ENCODE measurements at regions of chr13 and their contacts with region 1.

Region 1: GRCh38 chr13:52665325-52665724 is 12.7 kb downstream of the SUGT1 start:
- DNase-seq: no peak
- H3K4me3 ChIP-seq: no peak overlapping the region
- H3K4me3 Mint-ChIP-seq: no peak overlapping the region
- H3K27ac Mint-ChIP-seq: no peak overlapping the region
- H3K4me1 ChIP-seq: no peaks in the 10 kb centered on the region
- H3K4me1 Mint-ChIP-seq: no peaks in the 10 kb centered on the region
- H3K27me3 ChIP-seq: no peaks in the 10 kb centered on the region
- H3K27me3 Mint-ChIP-seq: no peaks in the 10 kb centered on the region
- CTCF ChIP-seq: peak; percentile 42 to 44

Region 2: DNA sequence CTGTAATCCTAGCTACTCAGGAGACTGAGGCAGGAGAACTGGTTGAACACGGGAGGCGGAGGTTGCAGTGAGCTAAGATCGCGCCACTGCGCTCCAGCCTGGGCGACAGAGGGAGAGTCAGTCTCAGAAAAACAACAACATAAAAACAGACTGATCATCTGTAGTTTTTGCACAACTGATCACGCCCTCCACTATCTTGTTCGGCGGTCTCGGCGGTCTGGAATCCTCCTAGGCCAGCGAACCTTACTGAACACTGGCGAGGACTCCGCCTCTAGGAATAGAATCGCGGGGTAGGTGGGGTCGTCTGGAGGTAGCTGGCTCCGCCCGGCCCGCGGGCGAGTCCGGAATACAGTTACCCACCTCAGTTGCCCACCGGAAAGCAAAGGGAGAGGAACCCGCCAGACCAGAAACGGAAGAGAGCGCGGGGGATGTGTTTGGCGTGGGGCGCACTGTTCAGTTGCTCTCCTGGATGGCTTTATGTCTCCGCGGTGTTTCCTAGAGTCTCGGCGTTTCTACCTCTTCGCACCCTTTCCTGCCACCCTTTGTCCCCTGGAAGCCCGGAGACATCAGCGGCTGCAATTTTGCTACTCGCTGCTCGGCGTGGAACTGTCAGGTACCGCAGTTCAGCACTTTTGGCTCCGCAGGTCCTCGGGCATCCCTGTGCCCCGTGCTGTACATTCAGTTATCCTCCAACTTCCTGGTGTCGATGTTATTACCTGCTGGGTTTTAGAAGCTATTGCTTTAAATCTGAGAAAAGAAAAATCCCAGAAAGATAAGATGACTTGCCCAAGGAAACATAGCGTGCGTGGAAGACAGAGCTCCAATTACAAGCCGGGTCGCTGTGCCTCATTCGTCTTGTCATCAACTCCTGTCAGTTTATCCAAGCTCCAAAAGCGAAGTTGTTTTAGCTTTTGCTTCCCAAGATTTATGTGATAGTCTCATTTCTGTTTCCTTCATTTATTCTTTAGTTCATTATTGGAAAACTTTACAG is 48.0 kb before region 1 on chr13:
- CTCF ChIA-PET with region 1: no interaction called
- POLR2A ChIA-PET with region 1: no interaction called
- intact Hi-C with region 1: no loop called
- DNase-seq: peak; percentile 89
- H3K4me3 ChIP-seq: peak overlapping the region; percentile 68
- H3K4me3 Mint-ChIP-seq: peak overlapping the region; percentile 100
- H3K27ac Mint-ChIP-seq: peak overlapping the region; percentile 87
- H3K4me1 ChIP-seq: no peaks in the 10 kb centered on the region
- H3K4me1 Mint-ChIP-seq: no peaks in the 10 kb centered on the region
- H3K27me3 ChIP-seq: no peaks in the 10 kb centered on the region
- H3K27me3 Mint-ChIP-seq: no peaks in the 10 kb centered on the region
- CTCF ChIP-seq: no peak

Region 3: GRCh38 chr13:52652196-52652979 is 12.9 kb before region 1 on chr13 and contains the start of gene SUGT1:
- CTCF ChIA-PET with region 1: interaction called, 13 read pairs
- POLR2A ChIA-PET with region 1: interaction called, 8 read pairs
- intact Hi-C with region 1: no loop called
- DNase-seq: peak; percentile 98
- H3K4me3 ChIP-seq: peak within 1 kb of the TSS; percentile 53
- H3K4me3 Mint-ChIP-seq: no peak within 1 kb of the TSS
- H3K27ac Mint-ChIP-seq: no peak within 1 kb of the TSS
- H3K4me1 ChIP-seq: peaks cover 17% of the 10 kb centered on the region
- H3K4me1 Mint-ChIP-seq: no peaks in the 10 kb centered on the region
- H3K27me3 ChIP-seq: no peaks in the 10 kb centered on the region
- H3K27me3 Mint-ChIP-seq: no peaks in the 10 kb centered on the region
- CTCF ChIP-seq: peak; percentile 71 to 83
- total RNA-seq, gene SUGT1: 73.6 and 84.3 TPM in 2 replicates

Region 4: DNA sequence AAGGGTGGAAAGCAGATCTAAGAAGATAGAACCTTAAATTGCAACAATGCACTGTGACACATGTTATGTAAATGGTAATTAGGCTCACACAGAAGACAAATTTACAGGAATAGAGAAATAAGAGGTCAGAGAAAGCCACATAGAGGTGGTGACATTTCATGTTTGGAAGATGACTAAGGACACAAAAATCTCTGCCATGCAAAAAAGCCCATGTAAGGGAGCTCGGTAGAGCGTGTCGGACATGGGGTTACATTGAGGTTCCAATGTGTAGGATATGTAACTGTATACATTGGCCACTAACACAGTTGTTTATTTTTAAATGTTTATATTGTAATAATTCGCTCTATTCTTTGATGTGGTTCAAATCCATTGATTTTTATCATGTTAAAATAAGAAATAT is 21.1 kb after region 1 on chr13:
- CTCF ChIA-PET with region 1: no interaction called
- POLR2A ChIA-PET with region 1: no interaction called
- intact Hi-C with region 1: no loop called
- DNase-seq: no peak
- H3K4me3 ChIP-seq: no peak overlapping the region
- H3K4me3 Mint-ChIP-seq: no peak overlapping the region
- H3K27ac Mint-ChIP-seq: no peak overlapping the region
- H3K4me1 ChIP-seq: peaks cover 11% of the 10 kb centered on the region; the same call in 1 of the 2 replicates
- H3K4me1 Mint-ChIP-seq: peaks cover 6% of the 10 kb centered on the region
- H3K27me3 ChIP-seq: no peaks in the 10 kb centered on the region
- H3K27me3 Mint-ChIP-seq: no peaks in the 10 kb centered on the region
- CTCF ChIP-seq: no peak

Measured in Caco-2 (cell line).